ENCODE measurements at regions of chr4 and their contacts with region 1.

Region 1: DNA sequence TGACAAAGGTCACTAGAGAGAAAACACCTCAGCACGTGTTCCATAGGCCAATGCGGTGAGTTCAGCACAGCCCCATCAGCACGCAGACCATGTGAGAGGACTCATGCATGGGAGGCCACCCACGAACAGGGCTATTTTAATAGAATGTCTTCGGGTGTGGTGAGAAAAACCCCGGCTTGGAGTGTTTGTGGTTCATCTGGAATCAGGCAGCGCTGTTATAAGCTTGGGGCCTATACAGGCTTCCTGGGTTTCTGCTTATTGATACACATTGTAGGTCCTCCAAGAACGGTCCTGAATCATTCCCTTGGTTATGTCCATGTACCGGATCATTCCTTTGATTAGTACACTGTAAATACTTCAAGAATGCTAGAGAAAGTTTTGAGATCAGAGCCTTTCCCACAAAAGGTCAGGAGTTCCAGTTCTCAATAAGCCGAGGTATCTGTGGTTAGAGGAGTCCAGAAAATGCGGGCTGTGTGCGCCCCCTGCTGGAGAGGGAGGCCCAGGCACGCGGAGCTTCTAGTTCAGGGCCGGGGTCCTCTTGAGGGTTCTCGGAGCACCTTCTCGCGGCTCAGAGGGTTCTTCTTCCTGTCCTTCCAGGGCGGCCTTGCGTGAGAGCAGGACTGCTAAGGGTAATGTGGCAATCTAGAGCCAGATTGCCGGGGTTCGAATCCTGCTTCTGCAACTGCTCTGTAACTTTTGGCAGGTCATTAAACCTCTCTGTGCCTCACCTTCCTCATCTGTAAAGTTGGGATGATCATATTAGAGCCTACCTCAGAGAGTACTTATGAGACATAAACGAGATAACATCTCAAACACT is 51.8 kb downstream of the TLR10 start:
- DNase-seq: peak; percentile 37 to 65
- ATAC-seq: peak; percentile 73 to 75
- H3K4me3 ChIP-seq: no peak overlapping the region
- H3K27ac ChIP-seq: no peak overlapping the region
- H3K4me1 ChIP-seq: no peaks in the 10 kb centered on the region
- H3K27me3 ChIP-seq: no peaks in the 10 kb centered on the region
- CTCF ChIP-seq: peak; percentile 82 to 88 (median 85)
- POLR2A ChIP-seq: no peak

Region 2: DNA sequence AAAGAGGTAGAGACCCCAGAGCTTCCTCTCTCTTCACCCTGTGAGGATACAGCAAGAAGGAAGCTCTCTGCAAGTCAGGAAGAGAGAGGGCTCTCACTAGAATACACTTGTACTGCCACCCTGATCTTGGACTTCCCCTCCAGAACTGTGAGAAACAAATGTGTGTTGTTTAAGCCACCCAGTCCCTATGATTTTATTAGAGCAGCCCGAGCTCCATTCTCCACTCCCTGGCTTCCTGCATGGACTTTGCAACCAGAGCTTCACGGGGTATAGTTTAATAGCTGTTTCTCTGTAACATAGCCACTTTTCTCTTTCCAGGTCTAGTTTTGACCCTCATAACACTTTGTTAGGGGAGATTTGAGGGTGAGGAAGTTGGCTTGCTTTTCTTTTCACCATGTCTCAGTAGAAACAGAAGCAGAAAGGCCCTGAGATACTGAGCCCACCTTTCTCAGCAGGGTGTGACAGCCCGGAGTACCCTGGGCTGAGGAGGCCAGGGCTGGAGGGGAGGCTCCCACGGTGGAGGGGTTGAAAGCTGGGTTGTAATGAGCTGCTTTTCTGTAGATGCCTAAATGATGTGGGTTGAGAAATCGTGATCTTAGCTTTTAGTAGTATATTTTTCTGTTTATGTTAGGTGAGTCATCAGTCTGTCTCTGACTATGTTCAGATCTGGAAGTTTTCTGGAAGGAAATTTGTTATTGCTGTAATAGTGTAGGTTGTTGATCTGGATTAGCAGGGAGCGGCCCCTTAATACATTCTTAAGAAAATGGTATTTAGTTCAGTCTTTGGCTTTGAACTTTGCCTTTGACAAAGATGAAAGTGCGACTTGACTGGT is 652.2 kb before region 1 on chr4:
- in situ Hi-C with region 1: loop called in 3 of 4 experiments (anchors 10 to 25 kb)
- intact Hi-C with region 1: no loop called
- DNase-seq: no peak
- ATAC-seq: no peak
- H3K4me3 ChIP-seq: no peak overlapping the region
- H3K27ac ChIP-seq: peak overlapping the region in 3 of 4 donors; percentile 25 to 37 (median 28)
- H3K4me1 ChIP-seq: peaks cover 17 to 30% of the 10 kb centered on the region in 2 donors
- H3K27me3 ChIP-seq: no peaks in the 10 kb centered on the region
- CTCF ChIP-seq: no peak
- POLR2A ChIP-seq: no peak

Measured in gastrocnemius medialis (tissue), 4 donors.